ENCODE measurements at regions of chr3 and their contacts with region 1.

Region 1: DNA sequence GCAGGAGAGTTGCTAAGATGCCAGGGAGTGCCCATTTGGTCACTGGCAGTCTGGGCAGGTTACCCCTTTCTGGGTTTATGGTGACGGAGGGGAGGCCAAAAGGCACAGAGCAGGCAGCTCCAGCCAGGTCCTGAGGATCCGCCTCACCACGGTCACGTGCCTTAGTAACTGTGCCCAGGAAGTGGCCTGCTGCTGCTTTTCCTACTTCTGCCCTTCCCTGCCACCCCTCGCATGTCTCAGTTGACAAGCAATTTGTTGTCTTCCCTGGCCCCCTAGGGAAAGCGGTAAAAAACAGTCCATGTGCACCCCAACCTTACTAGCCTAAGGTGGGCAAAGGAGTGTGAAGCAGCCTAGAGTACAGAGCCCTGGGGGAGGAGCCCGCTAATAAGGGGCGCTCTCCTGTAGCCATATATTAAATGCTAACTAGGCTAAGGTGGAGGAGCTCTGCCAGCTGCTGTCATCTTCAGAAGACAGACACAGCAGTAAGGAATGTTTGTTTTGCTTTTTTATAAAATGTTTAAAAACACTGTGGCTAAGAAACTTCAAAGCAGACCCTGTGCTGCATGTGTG is 9.1 kb upstream of the LIPH start:
- DNase-seq: no peak
- H3K4me3 Mint-ChIP-seq: no peak overlapping the region
- H3K27ac Mint-ChIP-seq: no peak overlapping the region
- H3K4me1 Mint-ChIP-seq: peaks cover 15% of the 10 kb centered on the region
- H3K27me3 Mint-ChIP-seq: no peaks in the 10 kb centered on the region
- CTCF ChIP-seq: no peak

Region 2: DNA sequence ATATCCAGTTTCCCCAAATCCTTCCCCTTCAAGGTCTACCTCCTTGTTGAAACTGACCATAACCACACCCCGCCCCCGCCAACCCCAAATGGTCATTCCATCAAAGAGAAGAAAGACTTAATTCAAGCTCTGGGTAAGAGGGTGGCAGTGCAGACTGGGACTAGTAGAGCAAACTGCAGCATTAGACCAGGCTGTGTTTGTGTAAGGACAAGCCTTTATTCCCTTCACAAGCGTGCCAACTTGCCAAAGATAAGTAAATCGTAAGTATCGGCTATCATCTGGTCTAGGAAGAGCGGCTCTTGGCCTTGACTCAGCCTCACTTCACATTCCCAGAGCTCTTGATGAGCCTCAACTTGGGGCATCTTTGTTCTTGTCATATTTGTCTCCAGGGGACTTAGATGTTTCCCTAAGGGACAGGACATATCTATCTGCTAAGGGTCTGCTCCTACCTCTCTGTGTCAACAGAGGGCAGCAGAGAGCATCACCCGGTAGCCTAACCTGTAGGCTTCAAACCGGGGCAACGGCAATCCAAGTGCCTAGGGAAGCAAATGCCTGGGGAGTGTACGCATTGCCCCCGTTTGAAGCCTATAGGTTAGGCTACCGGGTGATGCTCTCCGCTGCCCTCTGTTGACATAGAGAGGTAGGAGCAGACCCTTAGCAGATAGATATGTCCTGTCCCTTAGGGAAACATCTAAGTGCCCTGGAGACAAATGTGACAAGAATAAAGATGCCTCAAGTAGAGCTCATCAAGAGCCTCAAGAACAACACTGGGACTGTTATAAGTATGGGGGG is 207.4 kb before region 1 on chr3:
- CTCF ChIA-PET with region 1: interaction called, 4 read pairs
- POLR2A ChIA-PET with region 1: interaction called, 3 read pairs
- intact Hi-C with region 1: loop called (anchors 5 kb)
- DNase-seq: peak; percentile 87
- H3K4me3 Mint-ChIP-seq: no peak overlapping the region
- H3K27ac Mint-ChIP-seq: no peak overlapping the region
- H3K4me1 Mint-ChIP-seq: peaks cover 7% of the 10 kb centered on the region
- H3K27me3 Mint-ChIP-seq: no peaks in the 10 kb centered on the region
- CTCF ChIP-seq: peak; percentile 48

Region 3: DNA sequence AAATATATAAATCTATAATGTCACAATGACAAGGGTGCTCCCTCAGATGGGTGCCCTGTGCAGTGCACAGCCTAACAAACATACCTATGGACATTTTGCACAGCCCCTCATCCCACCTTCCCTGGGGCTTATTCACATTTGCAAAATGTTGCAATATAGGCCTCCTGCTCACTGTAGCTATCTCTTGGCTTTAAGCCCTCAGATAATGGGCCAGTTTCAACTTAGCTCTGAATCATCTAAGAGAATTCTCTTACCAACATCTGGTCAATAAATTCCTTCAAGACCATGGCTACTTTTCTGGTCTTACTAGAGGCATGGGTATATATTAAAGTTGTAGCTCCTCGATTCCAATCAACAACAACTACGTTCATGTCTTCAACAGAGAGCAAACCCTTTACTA is 26.9 kb before region 1 on chr3:
- CTCF ChIA-PET with region 1: interaction called, 10 read pairs
- POLR2A ChIA-PET with region 1: interaction called, 3 read pairs
- intact Hi-C with region 1: no loop called
- DNase-seq: no peak
- H3K4me3 Mint-ChIP-seq: no peak overlapping the region
- H3K27ac Mint-ChIP-seq: no peak overlapping the region
- H3K4me1 Mint-ChIP-seq: peaks cover 8% of the 10 kb centered on the region
- H3K27me3 Mint-ChIP-seq: no peaks in the 10 kb centered on the region
- CTCF ChIP-seq: no peak

Region 4: GRCh38 chr3:185572183-185572582 is 10.7 kb after region 1 on chr3:
- CTCF ChIA-PET with region 1: interaction called, 26 read pairs
- POLR2A ChIA-PET with region 1: no interaction called
- intact Hi-C with region 1: no loop called
- DNase-seq: no peak
- H3K4me3 Mint-ChIP-seq: no peak overlapping the region
- H3K27ac Mint-ChIP-seq: no peak overlapping the region
- H3K4me1 Mint-ChIP-seq: peaks cover 7% of the 10 kb centered on the region
- H3K27me3 Mint-ChIP-seq: no peaks in the 10 kb centered on the region
- CTCF ChIP-seq: no peak